Calu3 (cell line): ENCODE measurements at regions of chr17 and their contacts with region 1.

Region 1: DNA sequence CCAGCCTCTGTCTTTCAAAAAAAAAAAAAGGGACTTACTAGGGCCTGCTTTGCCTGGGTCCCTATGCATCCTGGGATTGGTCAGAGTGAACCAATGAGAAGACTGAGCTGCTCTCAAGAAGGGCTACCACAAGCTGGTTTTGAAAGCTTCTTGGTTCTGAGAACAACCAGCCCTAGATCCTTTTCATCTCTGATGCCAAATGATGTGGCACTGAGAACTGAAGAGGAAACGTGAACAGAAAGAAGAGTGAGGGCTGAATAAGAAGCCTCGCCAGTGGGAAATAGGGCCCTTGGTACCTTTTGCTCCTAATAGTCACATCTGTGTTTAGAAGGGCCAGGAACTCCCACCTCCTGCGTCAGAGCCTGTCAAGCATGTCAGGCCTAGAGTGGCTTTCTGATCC is 10.7 kb downstream of the TACO1 start:
- DNase-seq: no peak
- H3K4me3 Mint-ChIP-seq: no peak overlapping the region
- H3K27ac Mint-ChIP-seq: no peak overlapping the region
- H3K4me1 Mint-ChIP-seq: no peaks in the 10 kb centered on the region
- H3K27me3 Mint-ChIP-seq: no peaks in the 10 kb centered on the region
- CTCF ChIP-seq: no peak

Region 2: DNA sequence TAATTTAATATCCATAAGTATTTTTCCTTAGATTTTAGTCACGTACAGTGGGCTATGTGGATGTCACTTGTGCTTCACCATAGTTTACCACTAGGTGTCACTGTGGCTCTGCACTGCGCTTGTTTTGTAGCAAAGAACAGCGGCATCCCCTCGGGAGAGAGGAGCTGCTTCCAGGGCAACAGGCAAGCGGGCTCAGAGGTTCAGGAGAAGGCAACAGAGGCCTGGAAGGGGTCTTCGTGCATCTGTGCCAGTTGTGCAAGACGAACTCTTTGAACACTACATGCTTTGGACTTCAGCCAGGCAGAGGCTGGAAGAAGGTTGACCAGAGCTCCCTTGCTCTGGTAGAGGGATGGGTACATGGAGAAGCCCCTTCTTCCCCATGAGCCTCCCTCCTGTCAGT is 185.9 kb before region 1 on chr17:
- CTCF ChIA-PET with region 1: interaction called, 10 read pairs
- intact Hi-C with region 1: loop called (anchors 2 kb)
- DNase-seq: peak; percentile 66
- H3K4me3 Mint-ChIP-seq: no peak overlapping the region
- H3K27ac Mint-ChIP-seq: no peak overlapping the region
- H3K4me1 Mint-ChIP-seq: no peaks in the 10 kb centered on the region
- H3K27me3 Mint-ChIP-seq: no peaks in the 10 kb centered on the region
- CTCF ChIP-seq: peak; percentile 84

Region 3: GRCh38 chr17:63447437-63448009 is 163.8 kb before region 1 on chr17:
- CTCF ChIA-PET with region 1: no interaction called
- intact Hi-C with region 1: no loop called
- DNase-seq: no peak
- H3K4me3 Mint-ChIP-seq: peak overlapping the region; percentile 73
- H3K27ac Mint-ChIP-seq: peak overlapping the region; percentile 73
- H3K4me1 Mint-ChIP-seq: peaks cover 8% of the 10 kb centered on the region
- H3K27me3 Mint-ChIP-seq: no peaks in the 10 kb centered on the region
- CTCF ChIP-seq: no peak

Region 4: GRCh38 chr17:63848834-63849700 is 237.7 kb after region 1 on chr17:
- CTCF ChIA-PET with region 1: no interaction called
- intact Hi-C with region 1: no loop called
- DNase-seq: peak; percentile 92
- H3K4me3 Mint-ChIP-seq: peak overlapping the region; percentile 48
- H3K27ac Mint-ChIP-seq: peak overlapping the region; percentile 84
- H3K4me1 Mint-ChIP-seq: no peaks in the 10 kb centered on the region
- H3K27me3 Mint-ChIP-seq: no peaks in the 10 kb centered on the region
- CTCF ChIP-seq: peak; percentile 64

Region 5: DNA sequence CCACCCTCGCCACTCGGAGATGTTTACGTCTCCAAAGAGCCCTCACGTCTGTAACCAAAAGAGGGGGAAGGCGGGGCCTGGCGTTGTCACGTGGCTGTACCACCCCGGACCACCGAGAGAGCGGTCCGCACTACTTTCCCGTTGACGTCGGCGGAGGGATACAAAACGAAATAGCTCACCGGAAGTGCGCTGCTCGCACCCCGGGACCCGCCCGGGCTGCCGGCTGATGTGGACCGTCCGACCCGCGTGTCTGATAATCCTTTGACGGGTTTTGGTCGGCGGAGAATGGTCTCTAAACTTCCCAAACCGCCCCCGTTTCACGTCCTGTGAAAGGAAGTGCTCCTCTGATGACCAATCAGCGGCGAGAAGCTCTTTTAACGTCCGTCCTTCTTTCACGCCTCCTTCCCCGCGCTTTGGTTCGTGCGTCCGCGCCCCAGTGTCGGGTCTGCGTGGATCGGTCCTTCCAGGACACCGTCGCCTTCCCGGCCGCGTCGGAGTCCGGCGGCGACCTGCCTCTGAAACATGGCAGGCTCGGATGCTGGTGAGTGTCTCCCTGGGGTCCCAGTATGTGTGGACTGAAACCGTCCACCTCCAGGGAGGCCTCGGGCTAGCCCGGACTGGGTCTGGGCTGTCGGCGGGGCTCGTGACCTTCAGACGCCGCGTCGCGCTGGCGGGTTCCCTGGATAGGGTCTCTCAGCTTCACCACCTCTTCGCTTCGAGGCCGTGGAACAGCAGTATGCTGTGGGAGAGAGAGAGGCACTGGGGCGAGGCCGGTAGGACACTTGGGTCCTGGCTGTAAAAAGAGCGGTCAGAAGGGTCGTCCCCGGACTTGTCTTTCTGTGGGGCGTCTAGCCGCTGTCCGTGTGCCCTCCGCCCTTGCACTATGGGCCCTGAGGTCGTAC is 895.5 kb after region 1 on chr17 and contains the start of gene CEP95:
- CTCF ChIA-PET with region 1: interaction called, 11 read pairs
- intact Hi-C with region 1: no loop called
- DNase-seq: peak; percentile 91
- H3K4me3 Mint-ChIP-seq: peak within 1 kb of the TSS; percentile 86
- H3K27ac Mint-ChIP-seq: peak within 1 kb of the TSS; percentile 99
- H3K4me1 Mint-ChIP-seq: peaks cover 16% of the 10 kb centered on the region
- H3K27me3 Mint-ChIP-seq: no peaks in the 10 kb centered on the region
- CTCF ChIP-seq: no peak
- total RNA-seq, gene CEP95: 37.6 and 38.9 TPM in 2 replicates